Breast epithelium (tissue), 4 donors: ENCODE measurements at regions of chr9 and their contacts with region 1.

Region 1: DNA sequence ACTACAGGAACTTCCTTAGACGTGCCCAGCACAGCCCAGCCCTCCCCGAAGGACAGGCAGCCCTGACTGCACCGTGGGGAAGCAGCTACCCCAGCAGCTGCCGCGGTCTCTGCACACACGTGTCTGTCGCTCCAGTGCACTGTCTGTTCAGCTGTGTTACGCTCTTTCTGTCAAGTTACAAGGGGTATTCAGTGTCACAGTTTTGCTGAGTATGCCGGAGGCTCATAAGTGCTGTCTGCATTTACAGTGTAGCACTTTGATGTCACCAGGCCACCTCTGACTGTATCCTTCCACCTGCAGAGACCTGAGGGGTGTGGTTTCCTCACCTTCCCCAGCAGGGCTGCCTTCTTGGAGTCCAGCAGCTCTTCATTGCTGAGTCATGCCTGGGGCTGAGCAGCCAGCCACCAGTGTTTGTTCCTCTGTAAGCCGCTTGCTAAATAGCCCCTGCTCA is 126.8 kb downstream of the EHMT1 start:
- DNase-seq: no peak
- H3K4me3 ChIP-seq: no peak overlapping the region
- H3K27ac ChIP-seq: no peak overlapping the region
- H3K4me1 ChIP-seq: no peaks in the 10 kb centered on the region
- H3K27me3 ChIP-seq: no peaks in the 10 kb centered on the region
- CTCF ChIP-seq: no peak
- POLR2A ChIP-seq: no peak

Region 2: GRCh38 chr9:137731216-137731946 is 14.2 kb before region 1 on chr9:
- intact Hi-C with region 1: no loop called
- DNase-seq: no peak
- H3K4me3 ChIP-seq: no peak overlapping the region
- H3K27ac ChIP-seq: no peak overlapping the region
- H3K4me1 ChIP-seq: no peaks in the 10 kb centered on the region
- H3K27me3 ChIP-seq: no peaks in the 10 kb centered on the region
- CTCF ChIP-seq: no peak
- POLR2A ChIP-seq: no peak

Region 3: GRCh38 chr9:137776306-137776995 is 30.9 kb after region 1 on chr9:
- intact Hi-C with region 1: loop called (anchors 1 kb)
- DNase-seq: no peak
- H3K4me3 ChIP-seq: no peak overlapping the region
- H3K27ac ChIP-seq: no peak overlapping the region
- H3K4me1 ChIP-seq: no peaks in the 10 kb centered on the region
- H3K27me3 ChIP-seq: no peaks in the 10 kb centered on the region
- CTCF ChIP-seq: no peak
- POLR2A ChIP-seq: no peak